Ascending aorta (tissue), 2 donors: ENCODE measurements at regions of chr1 and their contacts with region 1.

Region 1: DNA sequence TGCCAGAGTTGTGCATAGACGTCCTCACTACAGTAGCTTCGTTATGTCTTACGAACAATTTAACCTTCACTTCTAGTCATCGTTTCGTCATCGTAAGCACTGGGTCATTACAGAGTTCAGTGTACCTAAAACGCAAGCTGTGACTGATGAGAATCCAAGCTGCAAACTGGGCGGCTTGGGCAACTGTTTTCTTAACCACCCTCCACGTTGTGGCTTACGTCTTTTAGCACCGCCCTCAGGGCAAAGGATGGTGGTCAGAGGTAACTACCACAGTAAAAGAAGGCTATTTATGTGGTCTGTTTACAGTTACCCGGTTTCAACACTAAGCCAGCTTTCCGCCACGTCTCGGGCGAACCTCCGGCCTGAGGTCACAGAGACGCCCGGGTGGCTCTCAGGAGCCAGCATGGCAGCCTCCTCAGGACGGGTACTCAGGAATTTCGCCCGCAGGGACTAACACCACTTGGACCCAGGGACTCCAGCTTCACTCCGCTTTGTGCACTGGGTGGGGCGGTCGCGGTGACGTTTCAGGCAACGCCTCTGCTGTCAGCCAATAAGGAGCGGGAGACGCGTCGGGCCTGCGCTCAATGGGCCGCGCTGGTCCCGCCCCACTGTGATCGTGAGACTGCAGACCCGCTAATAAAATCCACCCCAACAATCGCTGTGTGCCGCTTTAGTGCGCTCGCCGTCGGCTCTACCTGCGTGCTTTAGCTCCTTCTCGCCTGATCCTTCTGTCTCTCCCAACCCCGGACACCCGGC is at the start of gene CTH:
- DNase-seq: peak; percentile 91 to 98
- H3K4me3 ChIP-seq: peak within 1 kb of the TSS; percentile 73 to 91
- H3K27ac ChIP-seq: peak within 1 kb of the TSS; percentile 93 to 96
- H3K4me1 ChIP-seq: peaks cover 0 to 7% of the 10 kb centered on the region in 2 donors
- H3K27me3 ChIP-seq: no peaks in the 10 kb centered on the region
- CTCF ChIP-seq: no peak
- total RNA-seq, gene CTH: 4.3 TPM

Region 2: GRCh38 chr1:70205434-70206118 is 205.2 kb before region 1 on chr1 and contains the start of gene LRRC40:
- intact Hi-C with region 1: loop called (anchors 5 kb)
- DNase-seq: peak; percentile 88 to 97
- H3K4me3 ChIP-seq: peak within 1 kb of the TSS; percentile 72 to 82
- H3K27ac ChIP-seq: peak within 1 kb of the TSS; percentile 85 to 94
- H3K4me1 ChIP-seq: peaks cover 0 to 28% of the 10 kb centered on the region in 2 donors
- H3K27me3 ChIP-seq: no peaks in the 10 kb centered on the region
- CTCF ChIP-seq: no peak
- total RNA-seq, gene LRRC40: 10.6 TPM

Region 3: GRCh38 chr1:70397014-70397413 is 13.8 kb before region 1 on chr1:
- intact Hi-C with region 1: no loop called
- DNase-seq: no peak
- H3K4me3 ChIP-seq: no peak overlapping the region
- H3K27ac ChIP-seq: no peak overlapping the region
- H3K4me1 ChIP-seq: no peaks in the 10 kb centered on the region
- H3K27me3 ChIP-seq: no peaks in the 10 kb centered on the region
- CTCF ChIP-seq: no peak